ENCODE measurements at regions of chr4 and their contacts with region 1.

Region 1: GRCh38 chr4:46931981-46932380 is 22.9 kb upstream of the COX7B2 start:
- DNase-seq: peak; percentile 49
- ATAC-seq: peak; percentile 97
- H3K4me3 Mint-ChIP-seq: no peak overlapping the region
- H3K27ac Mint-ChIP-seq: no peak overlapping the region
- H3K4me1 Mint-ChIP-seq: no peaks in the 10 kb centered on the region
- H3K27me3 Mint-ChIP-seq: no peaks in the 10 kb centered on the region
- CTCF ChIP-seq: peak; percentile 40; the same call in 1 of the 2 replicates

Region 2: GRCh38 chr4:46909078-46909477 is 22.9 kb before region 1 on chr4 and contains the start of gene COX7B2:
- CTCF ChIA-PET with region 1: no interaction called
- POLR2A ChIA-PET with region 1: no interaction called
- DNase-seq: no peak
- ATAC-seq: no peak
- H3K4me3 Mint-ChIP-seq: no peak within 1 kb of the TSS
- H3K27ac Mint-ChIP-seq: no peak within 1 kb of the TSS
- H3K4me1 Mint-ChIP-seq: no peaks in the 10 kb centered on the region
- H3K27me3 Mint-ChIP-seq: no peaks in the 10 kb centered on the region
- CTCF ChIP-seq: no peak
- total RNA-seq, gene COX7B2: not detected in 3 replicates

Region 3: GRCh38 chr4:47032415-47033106 is 100.6 kb after region 1 on chr4:
- CTCF ChIA-PET with region 1: interaction called, 12 read pairs
- POLR2A ChIA-PET with region 1: interaction called, 3 read pairs
- DNase-seq: peak; percentile 87
- ATAC-seq: peak; percentile 91
- H3K4me3 Mint-ChIP-seq: peak overlapping the region; percentile 89
- H3K27ac Mint-ChIP-seq: no peak overlapping the region
- H3K4me1 Mint-ChIP-seq: peaks cover 18% of the 10 kb centered on the region
- H3K27me3 Mint-ChIP-seq: peaks cover 26% of the 10 kb centered on the region
- CTCF ChIP-seq: peak; percentile 59